ENCODE measurements at regions of chr4 and their contacts with region 1.

Region 1: GRCh38 chr4:158253350-158253980 is 43.2 kb downstream of the TMEM144 start:
- DNase-seq: no peak
- ATAC-seq: peak; percentile 56 to 62
- H3K4me3 ChIP-seq: no peak overlapping the region
- H3K27ac ChIP-seq: no peak overlapping the region
- H3K4me1 ChIP-seq: no peaks in the 10 kb centered on the region
- H3K27me3 ChIP-seq: no peaks in the 10 kb centered on the region
- CTCF ChIP-seq: peak in 4 of 5 experiments; percentile 20 to 54 (median 42)
- POLR2A ChIP-seq: no peak

Region 2: DNA sequence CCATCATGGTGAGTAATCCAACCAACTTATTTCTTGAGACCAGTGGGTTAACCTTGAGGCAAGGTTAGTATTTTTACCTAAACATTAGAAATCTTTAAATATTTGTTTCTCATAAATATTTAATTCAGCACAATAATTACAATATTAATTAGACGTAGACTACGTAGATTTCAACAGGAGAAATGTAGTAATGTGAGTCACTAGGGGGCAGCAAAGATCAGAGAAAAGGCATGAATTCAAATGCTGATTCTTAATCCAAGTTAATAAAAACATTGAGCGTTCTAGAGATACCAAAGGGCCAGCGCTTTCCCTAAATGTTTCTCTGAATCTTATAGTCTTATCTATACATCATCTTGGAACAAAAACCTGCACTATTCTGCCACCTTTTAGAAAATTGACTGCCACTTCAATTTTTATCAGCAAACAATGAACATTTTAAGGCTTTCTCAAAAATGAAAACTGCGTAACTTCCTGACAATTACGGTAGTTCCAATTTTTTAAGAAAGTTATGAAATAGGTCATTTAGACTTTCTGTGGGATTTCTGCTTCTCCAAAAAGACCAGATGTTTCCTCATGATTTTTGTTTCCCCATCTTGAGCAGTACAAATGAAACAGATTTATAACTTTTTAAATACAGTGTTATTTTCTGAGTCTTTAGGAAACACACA is 261.3 kb before region 1 on chr4:
- in situ Hi-C with region 1: loop called in 1 of 4 experiments (anchors 10 kb)
- intact Hi-C with region 1: loop called (anchors 2 kb)
- DNase-seq: peak in 1 of 2 donors; percentile 5
- ATAC-seq: peak; percentile 83 to 84
- H3K4me3 ChIP-seq: peak overlapping the region; percentile 32 to 41 (median 36)
- H3K27ac ChIP-seq: peak overlapping the region in 3 of 4 donors; percentile 51 to 56 (median 52)
- H3K4me1 ChIP-seq: peaks cover 0 to 5% of the 10 kb centered on the region in 2 donors
- H3K27me3 ChIP-seq: no peaks in the 10 kb centered on the region
- CTCF ChIP-seq: peak; percentile 44 to 69 (median 61)
- POLR2A ChIP-seq: no peak

Region 3: GRCh38 chr4:158193171-158193749 is 60.2 kb before region 1 on chr4:
- in situ Hi-C with region 1: loop called in 1 of 4 experiments (anchors 10 kb)
- intact Hi-C with region 1: loop called (anchors 5 kb)
- DNase-seq: no peak
- ATAC-seq: peak; percentile 50 to 80
- H3K4me3 ChIP-seq: no peak overlapping the region
- H3K27ac ChIP-seq: no peak overlapping the region
- H3K4me1 ChIP-seq: no peaks in the 10 kb centered on the region
- H3K27me3 ChIP-seq: no peaks in the 10 kb centered on the region
- CTCF ChIP-seq: peak; percentile 20 to 52 (median 40)
- POLR2A ChIP-seq: no peak

Region 4: DNA sequence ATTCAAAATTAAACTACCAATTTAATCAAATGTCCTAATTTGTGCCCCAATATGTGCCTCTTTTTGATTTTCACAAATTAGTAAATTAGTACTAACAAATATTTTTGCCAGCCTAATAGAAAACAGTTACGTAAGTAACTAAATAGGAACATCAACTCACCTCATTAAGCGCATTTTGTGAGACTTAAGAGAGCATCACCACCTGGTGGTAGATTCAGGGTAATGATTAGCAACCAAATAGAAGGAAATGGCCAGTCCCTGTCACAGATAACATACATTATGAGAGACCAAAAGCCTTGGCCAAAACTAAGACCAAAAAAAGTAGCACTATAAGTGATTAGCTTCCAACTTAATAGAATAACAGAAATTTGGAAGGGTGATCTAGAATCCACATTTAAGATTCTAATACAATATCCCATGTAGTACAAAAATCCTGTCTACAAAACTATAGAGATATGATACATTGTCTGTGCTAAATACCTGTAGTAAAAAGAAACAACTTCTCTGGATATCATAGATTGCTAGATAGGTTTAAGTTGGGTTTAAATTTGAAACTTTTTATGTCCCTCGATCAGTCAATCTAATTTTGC is 371.5 kb after region 1 on chr4:
- in situ Hi-C with region 1: loop called (anchors 5 to 10 kb)
- intact Hi-C with region 1: loop called (anchors 1 kb)
- DNase-seq: peak in 1 of 2 donors; percentile 3
- ATAC-seq: peak; percentile 73 to 82
- H3K4me3 ChIP-seq: peak overlapping the region in 2 of 4 donors; percentile 5 to 9
- H3K27ac ChIP-seq: peak overlapping the region; percentile 55 to 82 (median 70)
- H3K4me1 ChIP-seq: peaks cover 16 to 21% of the 10 kb centered on the region in 2 donors
- H3K27me3 ChIP-seq: no peaks in the 10 kb centered on the region
- CTCF ChIP-seq: peak; percentile 52 to 72 (median 68)
- POLR2A ChIP-seq: no peak

Measured in gastrocnemius medialis (tissue), 4 donors.